Activated T-helper 2 cell treated with anti-CD3 and anti-CD28 coated beads, Interferon-gamma antibody, Interleukin-2, Interleukin-4, amounts not matched to agents 10 μg/mL and 5 μg/mL and 100 μg/mL, durations not matched to agents 14 hours and 24 hours and 36 hours (primary cell): ENCODE measurements at regions of chr1 and their contacts with region 1.

Region 1: GRCh38 chr1:168342572-168343280 is 62.0 kb downstream of the TBX19 start:
- DNase-seq: peak; percentile 82
- H3K4me3 Mint-ChIP-seq: no peak overlapping the region
- H3K27ac Mint-ChIP-seq: peak overlapping the region; percentile 80
- H3K4me1 Mint-ChIP-seq: peaks cover 82% of the 10 kb centered on the region
- H3K27me3 Mint-ChIP-seq: no peaks in the 10 kb centered on the region

Region 2: DNA sequence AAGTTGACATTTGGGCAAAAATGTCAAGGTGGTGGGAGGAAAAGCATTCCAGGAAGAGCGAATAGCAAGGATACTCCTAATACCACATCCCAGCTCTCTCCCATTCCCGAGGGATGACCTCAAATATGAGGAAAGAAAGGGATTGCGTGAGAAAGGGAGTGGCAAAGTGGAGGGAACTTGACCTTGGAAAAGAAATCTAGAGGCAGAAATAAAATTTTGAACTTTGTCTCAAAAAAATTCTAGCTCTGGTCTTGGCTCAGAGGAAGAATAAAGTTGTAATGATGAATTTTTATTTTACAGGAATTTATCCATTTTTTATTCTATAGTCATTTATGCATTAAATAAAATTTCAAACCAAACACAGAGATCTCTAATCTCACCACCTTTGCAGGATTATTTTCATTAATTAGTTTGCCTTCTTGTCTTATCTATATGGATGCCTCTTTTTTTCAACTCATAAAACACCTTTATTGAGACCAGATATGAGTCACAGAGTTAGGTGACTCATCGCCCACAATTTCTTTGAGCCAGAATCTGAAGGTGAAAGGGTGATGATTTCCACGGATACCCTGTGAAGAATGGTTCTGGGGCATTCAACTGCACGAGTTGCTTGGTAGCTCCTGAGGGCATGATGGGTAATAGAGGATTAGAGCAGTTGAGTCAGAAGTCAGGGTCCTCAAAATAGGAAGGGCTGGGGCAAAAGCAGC is 66.0 kb after region 1 on chr1:
- intact Hi-C with region 1: loop called (anchors 2 kb)
- DNase-seq: peak; percentile 64
- H3K4me3 Mint-ChIP-seq: peak overlapping the region; percentile 40
- H3K27ac Mint-ChIP-seq: peak overlapping the region; percentile 90
- H3K4me1 Mint-ChIP-seq: peaks cover 48% of the 10 kb centered on the region
- H3K27me3 Mint-ChIP-seq: no peaks in the 10 kb centered on the region

Region 3: GRCh38 chr1:168439456-168440375 is 97.0 kb after region 1 on chr1:
- intact Hi-C with region 1: loop called (anchors 1 kb)
- DNase-seq: peak; percentile 79
- H3K4me3 Mint-ChIP-seq: peak overlapping the region; percentile 58
- H3K27ac Mint-ChIP-seq: peak overlapping the region; percentile 65
- H3K4me1 Mint-ChIP-seq: peaks cover 57% of the 10 kb centered on the region
- H3K27me3 Mint-ChIP-seq: no peaks in the 10 kb centered on the region

Region 4: GRCh38 chr1:168509875-168510791 is 167.4 kb after region 1 on chr1:
- intact Hi-C with region 1: loop called (anchors 5 kb)
- DNase-seq: no peak
- H3K4me3 Mint-ChIP-seq: peak overlapping the region; percentile 1
- H3K27ac Mint-ChIP-seq: peak overlapping the region; percentile 87
- H3K4me1 Mint-ChIP-seq: peaks cover 86% of the 10 kb centered on the region
- H3K27me3 Mint-ChIP-seq: no peaks in the 10 kb centered on the region

Region 5: GRCh38 chr1:168603501-168604110 is 260.9 kb after region 1 on chr1:
- intact Hi-C with region 1: loop called (anchors 1 kb)
- DNase-seq: peak; percentile 51
- H3K4me3 Mint-ChIP-seq: no peak overlapping the region
- H3K27ac Mint-ChIP-seq: no peak overlapping the region
- H3K4me1 Mint-ChIP-seq: peaks cover 5% of the 10 kb centered on the region
- H3K27me3 Mint-ChIP-seq: peaks cover 11% of the 10 kb centered on the region

Region 6: DNA sequence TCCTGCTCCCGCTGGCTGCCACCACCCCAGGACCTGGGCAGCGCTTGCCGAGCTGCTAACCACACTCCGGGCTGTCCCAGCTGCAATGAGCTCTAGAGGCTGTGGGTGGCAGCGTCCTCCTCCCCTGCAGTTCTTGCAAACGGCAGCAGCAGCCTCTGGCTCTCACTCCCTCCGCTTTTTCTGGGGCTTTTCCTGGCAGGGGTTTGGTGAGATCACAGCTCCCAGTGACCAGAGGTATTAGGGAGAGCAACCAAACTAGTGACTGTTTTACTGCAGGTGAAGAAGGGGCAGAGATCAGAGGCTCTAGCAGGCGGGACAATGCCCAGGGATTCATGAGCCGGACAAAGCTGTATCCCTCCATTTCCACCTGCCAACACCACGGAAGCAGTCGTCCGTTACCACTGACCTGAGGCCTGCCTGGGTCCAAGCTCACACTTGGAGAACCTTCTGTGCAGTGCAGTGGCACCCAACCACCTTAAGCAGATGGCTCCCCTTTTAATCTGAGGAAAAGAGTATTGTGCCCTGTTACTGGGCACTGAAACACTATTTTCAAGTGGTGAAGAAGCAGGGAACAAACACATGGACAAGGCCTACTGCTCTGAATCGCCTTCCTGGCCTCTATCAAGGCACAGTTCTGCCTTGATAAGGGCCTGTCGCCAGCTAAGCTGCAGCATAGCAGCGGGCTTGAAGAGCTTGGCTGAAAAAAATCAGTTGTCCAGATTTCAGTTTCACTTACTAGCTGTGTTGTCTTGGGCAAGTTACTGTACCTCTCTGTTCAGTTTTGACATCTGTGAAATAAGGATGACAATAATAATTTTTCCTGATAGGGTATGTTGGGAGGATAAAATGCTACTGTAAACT is 1243.9 kb after region 1 on chr1 and contains the start of gene F5:
- intact Hi-C with region 1: loop called (anchors 10 kb)
- DNase-seq: peak; percentile 69
- H3K4me3 Mint-ChIP-seq: peak within 1 kb of the TSS; percentile 89
- H3K27ac Mint-ChIP-seq: peak within 1 kb of the TSS; percentile 83
- H3K4me1 Mint-ChIP-seq: peaks cover 59% of the 10 kb centered on the region
- H3K27me3 Mint-ChIP-seq: no peaks in the 10 kb centered on the region
- total RNA-seq, gene F5: 25.0 and 26.0 TPM in 2 replicates